ENCODE measurements at regions of chr10 and their contacts with region 1.

Region 1: DNA sequence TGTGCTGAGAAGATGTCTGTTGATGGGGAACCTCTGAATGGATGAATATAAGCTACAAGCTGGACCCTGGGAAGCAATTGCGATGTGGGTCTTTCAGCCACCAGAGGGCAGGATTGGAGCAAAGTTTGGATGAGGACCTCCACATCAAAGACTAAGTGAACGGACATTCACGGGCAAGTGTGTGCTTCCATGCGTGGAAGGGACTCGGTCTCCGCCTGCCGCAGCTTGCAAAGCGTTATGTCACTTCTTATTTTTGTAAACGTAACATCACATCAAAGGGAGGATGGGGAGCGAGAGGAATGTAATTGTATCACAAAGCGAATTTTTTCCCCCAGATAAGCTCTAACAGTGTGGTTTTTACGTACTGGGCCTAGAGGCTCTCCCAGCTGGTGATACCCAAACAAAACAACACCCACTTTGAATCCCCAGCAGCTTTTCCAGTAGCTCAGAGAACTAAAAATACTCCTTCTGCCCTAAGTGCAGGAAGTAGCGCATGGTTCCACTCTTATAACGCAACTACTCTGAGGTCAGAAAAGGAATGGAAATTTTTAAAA is 65.0 kb downstream of the VWA2 start:
- DNase-seq: peak; percentile 87
- H3K4me3 ChIP-seq: peak overlapping the region; percentile 35
- H3K27ac ChIP-seq: no peak overlapping the region
- H3K4me1 ChIP-seq: peaks cover 7% of the 10 kb centered on the region
- H3K27me3 ChIP-seq: no peaks in the 10 kb centered on the region
- CTCF ChIP-seq: peak; percentile 86

Region 2: GRCh38 chr10:114276721-114277120 is 27.4 kb before region 1 on chr10:
- CTCF ChIA-PET with region 1: interaction called, 10 read pairs
- POLR2A ChIA-PET with region 1: no interaction called
- intact Hi-C with region 1: no loop called
- DNase-seq: no peak
- H3K4me3 ChIP-seq: no peak overlapping the region
- H3K27ac ChIP-seq: no peak overlapping the region
- H3K4me1 ChIP-seq: no peaks in the 10 kb centered on the region
- H3K27me3 ChIP-seq: peaks cover 8% of the 10 kb centered on the region
- CTCF ChIP-seq: no peak

Region 3: DNA sequence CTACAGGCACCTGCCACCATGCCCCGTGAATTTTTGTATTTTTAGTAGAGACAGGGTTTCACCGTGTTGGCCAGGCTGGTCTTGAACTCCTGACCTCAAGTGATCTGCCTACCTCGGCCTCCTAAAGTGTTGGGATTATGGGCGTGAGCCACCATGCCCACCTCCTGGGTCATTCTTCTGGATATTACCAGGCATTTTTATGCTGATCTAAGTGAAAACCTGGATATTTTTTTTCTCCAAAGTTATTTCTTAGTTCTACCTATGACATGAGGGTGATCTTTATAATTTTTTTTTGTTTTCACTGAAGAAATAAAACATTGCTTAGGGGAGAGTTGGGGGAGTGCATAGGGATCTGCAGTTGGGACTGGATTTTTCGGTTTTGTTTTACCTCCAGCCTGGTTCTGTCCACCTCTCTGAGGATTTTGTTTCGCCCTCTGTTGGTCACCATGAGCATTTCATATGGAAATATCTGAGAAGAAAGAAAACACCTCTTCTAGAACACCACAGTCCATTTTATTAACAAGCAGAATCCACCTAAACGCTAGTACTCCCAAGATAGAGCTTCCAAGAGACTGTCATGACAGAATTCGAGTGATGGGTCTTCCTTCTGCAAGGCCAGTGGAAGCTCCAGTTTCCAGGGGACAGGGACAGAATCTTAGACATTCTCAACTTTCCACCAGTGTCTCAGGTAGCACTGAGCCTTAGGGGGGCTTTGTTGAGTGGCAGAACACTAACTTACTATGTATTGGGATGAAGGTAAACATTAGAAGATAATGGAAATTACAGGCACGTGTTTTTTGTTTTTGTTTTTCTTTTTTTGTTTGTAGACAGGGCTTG is 133.6 kb after region 1 on chr10:
- CTCF ChIA-PET with region 1: interaction called, 5 read pairs
- POLR2A ChIA-PET with region 1: no interaction called
- intact Hi-C with region 1: loop called (anchors 10 kb)
- DNase-seq: peak; percentile 9
- H3K4me3 ChIP-seq: no peak overlapping the region
- H3K27ac ChIP-seq: no peak overlapping the region
- H3K4me1 ChIP-seq: no peaks in the 10 kb centered on the region
- H3K27me3 ChIP-seq: no peaks in the 10 kb centered on the region
- CTCF ChIP-seq: peak; percentile 56

Region 4: GRCh38 chr10:114550756-114551635 is 246.9 kb after region 1 on chr10:
- CTCF ChIA-PET with region 1: no interaction called
- POLR2A ChIA-PET with region 1: no interaction called
- intact Hi-C with region 1: loop called (anchors 2 kb)
- DNase-seq: peak; percentile 73
- H3K4me3 ChIP-seq: no peak overlapping the region
- H3K27ac ChIP-seq: no peak overlapping the region
- H3K4me1 ChIP-seq: peaks cover 6% of the 10 kb centered on the region
- H3K27me3 ChIP-seq: no peaks in the 10 kb centered on the region
- CTCF ChIP-seq: peak; percentile 66

Region 5: GRCh38 chr10:114779803-114780609 is 475.9 kb after region 1 on chr10:
- CTCF ChIA-PET with region 1: no interaction called
- POLR2A ChIA-PET with region 1: no interaction called
- intact Hi-C with region 1: loop called (anchors 5 kb)
- DNase-seq: peak; percentile 82
- H3K4me3 ChIP-seq: no peak overlapping the region
- H3K27ac ChIP-seq: no peak overlapping the region
- H3K4me1 ChIP-seq: peaks cover 17% of the 10 kb centered on the region
- H3K27me3 ChIP-seq: no peaks in the 10 kb centered on the region
- CTCF ChIP-seq: no peak

Measured in A673 (cell line).